Mammary epithelial cell (primary cell): ENCODE measurements at regions of chr6 and their contacts with region 1.

Region 1: DNA sequence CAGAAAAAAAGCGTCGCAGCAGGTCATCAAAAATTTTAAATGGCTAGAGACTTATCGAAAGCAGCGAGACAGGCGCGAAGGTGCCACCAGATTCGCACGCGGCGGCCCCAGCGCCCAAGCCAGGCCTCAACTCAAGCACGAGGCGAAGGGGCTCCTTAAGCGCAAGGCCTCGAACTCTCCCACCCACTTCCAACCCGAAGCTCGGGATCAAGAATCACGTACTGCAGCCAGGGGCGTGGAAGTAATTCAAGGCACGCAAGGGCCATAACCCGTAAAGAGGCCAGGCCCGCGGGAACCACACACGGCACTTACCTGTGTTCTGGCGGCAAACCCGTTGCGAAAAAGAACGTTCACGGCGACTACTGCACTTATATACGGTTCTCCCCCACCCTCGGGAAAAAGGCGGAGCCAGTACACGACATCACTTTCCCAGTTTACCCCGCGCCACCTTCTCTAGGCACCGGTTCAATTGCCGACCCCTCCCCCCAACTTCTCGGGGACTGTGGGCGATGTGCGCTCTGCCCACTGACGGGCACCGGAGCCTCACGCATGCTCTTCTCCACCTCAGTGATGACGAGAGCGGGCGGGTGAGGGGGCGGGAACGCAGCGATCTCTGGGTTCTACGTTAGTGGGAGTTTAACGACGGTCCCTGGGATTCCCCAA is at the start of gene EEF1A1:
- DNase-seq: peak; percentile 100
- H3K4me3 ChIP-seq: peak within 1 kb of the TSS; percentile 67 to 93 (median 79)
- H3K27ac ChIP-seq: peak within 1 kb of the TSS; percentile 98
- H3K4me1 ChIP-seq: peaks cover 19% of the 10 kb centered on the region
- H3K27me3 ChIP-seq: no peaks in the 10 kb centered on the region
- CTCF ChIP-seq: peak in 1 of 2 donors; percentile 7
- total RNA-seq, gene EEF1A1: 7,332 to 17,769 TPM

Region 2: DNA sequence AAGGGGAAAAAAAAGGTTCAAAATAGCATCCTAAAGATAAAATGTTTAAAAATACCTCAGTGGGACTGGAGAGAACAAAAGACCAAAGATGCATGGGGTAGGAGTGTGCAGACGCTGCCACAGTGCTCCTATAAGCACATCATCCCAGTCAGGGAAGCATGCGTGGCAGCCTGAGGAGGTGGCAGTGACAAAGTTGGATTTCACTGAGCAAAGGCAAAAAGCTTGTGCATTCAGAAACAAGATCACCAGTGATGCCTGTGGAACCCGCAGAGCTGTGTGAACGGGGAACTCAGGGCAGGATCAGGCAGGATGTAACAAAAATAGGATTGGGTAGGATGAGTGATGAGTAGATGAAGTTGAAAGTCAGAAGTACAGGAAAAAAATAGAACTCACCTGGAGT is 1518.4 kb before region 1 on chr6:
- CTCF ChIA-PET with region 1: no interaction called
- dilution Hi-C with region 1: no loop called
- in situ Hi-C with region 1: no loop called
- intact Hi-C with region 1: no loop called
- DNase-seq: no peak
- H3K4me3 ChIP-seq: no peak overlapping the region
- H3K27ac ChIP-seq: no peak overlapping the region
- H3K4me1 ChIP-seq: no peaks in the 10 kb centered on the region
- H3K27me3 ChIP-seq: peaks cover 2% of the 10 kb centered on the region
- CTCF ChIP-seq: no peak

Region 3: GRCh38 chr6:73476723-73477122 is 44.1 kb before region 1 on chr6:
- CTCF ChIA-PET with region 1: no interaction called
- dilution Hi-C with region 1: loop called (anchors 5 kb)
- in situ Hi-C with region 1: no loop called
- intact Hi-C with region 1: no loop called
- DNase-seq: no peak
- H3K4me3 ChIP-seq: no peak overlapping the region
- H3K27ac ChIP-seq: no peak overlapping the region
- H3K4me1 ChIP-seq: no peaks in the 10 kb centered on the region
- H3K27me3 ChIP-seq: no peaks in the 10 kb centered on the region
- CTCF ChIP-seq: no peak

Region 4: GRCh38 chr6:73532293-73532692 is 11.5 kb after region 1 on chr6:
- CTCF ChIA-PET with region 1: no interaction called
- dilution Hi-C with region 1: no loop called
- in situ Hi-C with region 1: no loop called
- intact Hi-C with region 1: no loop called
- DNase-seq: no peak
- H3K4me3 ChIP-seq: no peak overlapping the region
- H3K27ac ChIP-seq: no peak overlapping the region
- H3K4me1 ChIP-seq: no peaks in the 10 kb centered on the region
- H3K27me3 ChIP-seq: no peaks in the 10 kb centered on the region
- CTCF ChIP-seq: no peak

Region 5: GRCh38 chr6:73580247-73581149 is 59.7 kb after region 1 on chr6:
- CTCF ChIA-PET with region 1: no interaction called
- dilution Hi-C with region 1: no loop called
- in situ Hi-C with region 1: loop called in 1 of 2 experiments (anchors 5 kb)
- intact Hi-C with region 1: loop called (anchors 1 kb)
- DNase-seq: peak; percentile 98
- H3K4me3 ChIP-seq: peak overlapping the region; percentile 45 to 57 (median 48)
- H3K27ac ChIP-seq: peak overlapping the region; percentile 100
- H3K4me1 ChIP-seq: peaks cover 30% of the 10 kb centered on the region
- H3K27me3 ChIP-seq: no peaks in the 10 kb centered on the region
- CTCF ChIP-seq: peak; percentile 29 to 49

Region 6: DNA sequence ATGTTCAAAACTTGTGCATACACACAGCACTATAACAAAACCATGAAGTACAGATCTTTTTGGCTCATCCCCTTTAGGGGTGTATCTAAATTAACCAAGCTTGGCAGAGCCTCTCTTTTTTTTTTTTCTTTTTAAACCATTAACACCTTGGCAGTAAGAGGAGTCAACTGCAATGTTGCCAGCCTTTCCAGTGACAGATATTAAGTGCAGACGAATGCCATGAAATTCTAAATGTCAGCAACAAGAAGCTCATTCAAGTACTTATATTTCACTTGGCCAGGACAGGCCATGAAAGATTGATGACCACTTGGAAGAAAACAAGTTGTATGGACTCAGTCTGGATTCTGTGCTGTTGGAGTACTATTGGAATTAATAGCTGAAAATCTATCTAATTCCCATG is 83.2 kb after region 1 on chr6:
- CTCF ChIA-PET with region 1: no interaction called
- dilution Hi-C with region 1: loop called (anchors 10 kb)
- in situ Hi-C with region 1: loop called in 1 of 2 experiments (anchors 25 kb)
- intact Hi-C with region 1: no loop called
- DNase-seq: no peak
- H3K4me3 ChIP-seq: no peak overlapping the region
- H3K27ac ChIP-seq: no peak overlapping the region
- H3K4me1 ChIP-seq: no peaks in the 10 kb centered on the region
- H3K27me3 ChIP-seq: no peaks in the 10 kb centered on the region
- CTCF ChIP-seq: no peak

Region 7: GRCh38 chr6:73610444-73611275 is 89.8 kb after region 1 on chr6:
- CTCF ChIA-PET with region 1: no interaction called
- dilution Hi-C with region 1: loop called (anchors 10 kb)
- in situ Hi-C with region 1: loop called in 1 of 2 experiments (anchors 25 kb)
- intact Hi-C with region 1: loop called (anchors 1 kb)
- DNase-seq: peak; percentile 33
- H3K4me3 ChIP-seq: no peak overlapping the region
- H3K27ac ChIP-seq: no peak overlapping the region
- H3K4me1 ChIP-seq: no peaks in the 10 kb centered on the region
- H3K27me3 ChIP-seq: no peaks in the 10 kb centered on the region
- CTCF ChIP-seq: peak; percentile 61

Region 8: GRCh38 chr6:73653571-73654424 is 133.0 kb after region 1 on chr6 and contains the start of gene SLC17A5:
- CTCF ChIA-PET with region 1: interaction called, 4 read pairs
- dilution Hi-C with region 1: loop called (anchors 10 kb)
- in situ Hi-C with region 1: no loop called
- intact Hi-C with region 1: loop called (anchors 1 kb)
- DNase-seq: peak; percentile 92
- H3K4me3 ChIP-seq: peak within 1 kb of the TSS; percentile 59 to 99 (median 85)
- H3K27ac ChIP-seq: peak within 1 kb of the TSS; percentile 62
- H3K4me1 ChIP-seq: peaks cover 13% of the 10 kb centered on the region
- H3K27me3 ChIP-seq: no peaks in the 10 kb centered on the region
- CTCF ChIP-seq: no peak
- total RNA-seq, gene SLC17A5: 6.5 to 26.0 TPM